ENCODE measurements at regions of chr2 and their contacts with region 1.

Region 1: GRCh38 chr2:3651691-3652648 is 6.0 kb upstream of the ALLC start:
- DNase-seq: no peak
- ATAC-seq: no peak
- H3K4me3 ChIP-seq: no peak overlapping the region
- H3K27ac ChIP-seq: no peak overlapping the region
- H3K4me1 ChIP-seq: peaks cover 4% of the 10 kb centered on the region; the same call in 1 of the 2 replicates
- H3K27me3 ChIP-seq: no peaks in the 10 kb centered on the region; the same call in 1 of the 2 replicates
- CTCF ChIP-seq: no peak
- POLR2A ChIP-seq: no peak
- RAD21 ChIP-seq: no peak

Region 2: DNA sequence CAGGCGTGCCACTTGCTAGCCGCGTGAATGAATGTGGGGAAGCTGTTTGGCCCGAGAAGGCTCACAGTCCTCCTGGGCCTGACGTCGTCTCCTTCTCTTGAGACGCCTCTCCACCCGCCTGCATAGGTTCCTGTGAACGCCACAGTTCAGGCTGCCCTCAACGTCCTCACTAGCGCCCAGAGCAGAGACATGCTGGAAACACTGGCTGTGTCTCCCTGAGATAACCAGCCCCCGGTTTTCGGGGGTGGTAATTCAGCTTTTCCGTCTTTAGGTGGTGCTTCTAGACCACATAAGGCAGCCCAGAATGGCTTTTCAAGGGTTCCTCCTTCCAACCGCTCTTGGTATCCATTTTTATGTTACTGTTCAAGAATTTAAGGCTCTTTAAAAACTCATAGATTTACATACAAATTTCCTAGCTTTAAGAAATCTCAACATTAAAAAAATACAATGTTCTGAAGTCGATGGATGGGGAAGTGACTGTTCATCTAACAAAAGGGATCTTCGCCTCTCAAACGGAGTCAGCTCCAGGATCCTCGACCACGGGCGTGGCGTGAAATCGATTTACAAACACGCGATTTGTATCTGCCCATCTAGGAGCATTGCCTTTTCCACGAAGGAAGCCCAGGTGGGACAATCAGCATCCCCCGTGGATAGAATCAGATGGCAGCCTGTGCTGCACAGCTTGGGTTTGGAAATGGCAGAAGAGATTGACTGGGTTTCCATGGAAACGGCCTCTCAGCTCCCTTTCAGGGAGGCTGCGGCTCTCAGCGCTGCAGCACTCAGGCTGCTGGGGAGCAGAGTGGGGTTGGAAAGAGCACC is 1797.0 kb before region 1 on chr2:
- CTCF ChIA-PET with region 1: no interaction called
- POLR2A ChIA-PET with region 1: no interaction called
- dilution Hi-C with region 1: no loop called
- in situ Hi-C with region 1: loop called (anchors 25 kb)
- intact Hi-C with region 1: no loop called
- DNase-seq: peak; percentile 11
- ATAC-seq: peak; percentile 77
- H3K4me3 ChIP-seq: no peak overlapping the region
- H3K27ac ChIP-seq: no peak overlapping the region
- H3K4me1 ChIP-seq: no peaks in the 10 kb centered on the region
- H3K27me3 ChIP-seq: peaks cover 37% of the 10 kb centered on the region
- CTCF ChIP-seq: peak; percentile 43
- POLR2A ChIP-seq: no peak
- RAD21 ChIP-seq: peak; percentile 49

Region 3: DNA sequence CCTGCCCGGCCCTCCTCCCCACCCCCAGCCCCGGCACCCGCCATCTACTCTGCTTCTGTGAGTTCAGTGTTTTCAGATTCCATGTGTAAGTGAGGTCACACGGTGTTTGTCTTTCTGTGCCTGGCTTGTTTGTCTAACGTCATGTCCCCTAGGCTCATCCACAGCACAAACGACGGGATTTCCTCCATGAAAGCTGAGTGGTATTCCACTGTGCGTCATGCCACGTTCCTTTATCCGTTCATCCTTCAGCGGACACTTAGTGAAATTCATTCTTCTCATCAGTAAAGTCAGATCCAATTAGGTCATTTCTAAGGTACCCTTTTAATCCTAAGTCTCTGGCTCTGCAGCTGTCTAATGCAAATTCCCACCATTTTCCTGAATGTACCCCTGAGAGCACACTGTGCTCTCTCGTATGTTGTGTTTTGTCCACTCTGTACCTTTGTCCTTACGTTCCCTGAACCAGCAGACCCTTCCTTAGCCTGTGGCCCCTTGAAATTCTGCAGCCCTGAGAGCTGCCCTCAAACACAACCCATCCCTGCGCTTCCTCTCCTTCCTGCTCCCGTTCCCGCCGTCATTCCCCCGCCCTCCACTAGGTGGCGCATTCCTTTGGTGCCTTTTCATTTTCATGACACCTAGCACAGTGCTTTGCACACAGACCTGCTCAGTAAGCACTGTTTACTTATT is 228.3 kb before region 1 on chr2:
- CTCF ChIA-PET with region 1: interaction called, 3 read pairs
- POLR2A ChIA-PET with region 1: no interaction called
- dilution Hi-C with region 1: no loop called
- in situ Hi-C with region 1: loop called (anchors 10 kb)
- intact Hi-C with region 1: loop called (anchors 1 kb)
- DNase-seq: peak; percentile 27
- ATAC-seq: peak; percentile 60; the same call in 1 of the 2 replicates
- H3K4me3 ChIP-seq: no peak overlapping the region
- H3K27ac ChIP-seq: no peak overlapping the region
- H3K4me1 ChIP-seq: peaks cover 2% of the 10 kb centered on the region; the same call in 1 of the 2 replicates
- H3K27me3 ChIP-seq: no peaks in the 10 kb centered on the region
- CTCF ChIP-seq: peak; percentile 73
- POLR2A ChIP-seq: no peak
- RAD21 ChIP-seq: peak; percentile 62

Region 4: GRCh38 chr2:3461801-3462492 is 190.0 kb before region 1 on chr2:
- CTCF ChIA-PET with region 1: no interaction called
- POLR2A ChIA-PET with region 1: no interaction called
- dilution Hi-C with region 1: no loop called
- in situ Hi-C with region 1: no loop called
- intact Hi-C with region 1: loop called (anchors 5 kb)
- DNase-seq: peak; percentile 65
- ATAC-seq: peak; percentile 65
- H3K4me3 ChIP-seq: no peak overlapping the region
- H3K27ac ChIP-seq: no peak overlapping the region
- H3K4me1 ChIP-seq: peaks cover 12% of the 10 kb centered on the region
- H3K27me3 ChIP-seq: no peaks in the 10 kb centered on the region
- CTCF ChIP-seq: peak; percentile 88
- POLR2A ChIP-seq: no peak
- RAD21 ChIP-seq: peak; percentile 72

Region 5: GRCh38 chr2:3523551-3524041 is 128.4 kb before region 1 on chr2:
- CTCF ChIA-PET with region 1: no interaction called
- POLR2A ChIA-PET with region 1: no interaction called
- dilution Hi-C with region 1: no loop called
- in situ Hi-C with region 1: no loop called
- intact Hi-C with region 1: loop called (anchors 2 kb)
- DNase-seq: peak; percentile 49
- ATAC-seq: 0 out of 2 replicates have a peak, but pooled peaks have one; percentile 3
- H3K4me3 ChIP-seq: no peak overlapping the region
- H3K27ac ChIP-seq: peak overlapping the region; percentile 88; the same call in 1 of the 2 replicates
- H3K4me1 ChIP-seq: peaks cover 15% of the 10 kb centered on the region
- H3K27me3 ChIP-seq: no peaks in the 10 kb centered on the region
- CTCF ChIP-seq: no peak
- POLR2A ChIP-seq: no peak
- RAD21 ChIP-seq: no peak

Region 6: GRCh38 chr2:3558205-3559014 is 93.6 kb before region 1 on chr2 and contains the start of gene RNASEH1:
- CTCF ChIA-PET with region 1: no interaction called
- POLR2A ChIA-PET with region 1: no interaction called
- dilution Hi-C with region 1: no loop called
- in situ Hi-C with region 1: no loop called
- intact Hi-C with region 1: loop called (anchors 1 kb)
- DNase-seq: peak; percentile 99
- ATAC-seq: peak; percentile 99
- H3K4me3 ChIP-seq: peak within 1 kb of the TSS; percentile 68
- H3K27ac ChIP-seq: peak within 1 kb of the TSS; percentile 79
- H3K4me1 ChIP-seq: peaks cover 3% of the 10 kb centered on the region; the same call in 1 of the 2 replicates
- H3K27me3 ChIP-seq: no peaks in the 10 kb centered on the region
- CTCF ChIP-seq: no peak
- POLR2A ChIP-seq: peak; percentile 96
- RAD21 ChIP-seq: no peak
- total RNA-seq, gene RNASEH1: 23.7 and 38.3 TPM in 2 replicates

Region 7: GRCh38 chr2:3585261-3586109 is 66.5 kb before region 1 on chr2:
- CTCF ChIA-PET with region 1: no interaction called
- POLR2A ChIA-PET with region 1: no interaction called
- dilution Hi-C with region 1: no loop called
- in situ Hi-C with region 1: no loop called
- intact Hi-C with region 1: loop called (anchors 2 kb)
- DNase-seq: peak; percentile 95
- ATAC-seq: peak; percentile 69
- H3K4me3 ChIP-seq: peak overlapping the region; percentile 20
- H3K27ac ChIP-seq: peak overlapping the region; percentile 82
- H3K4me1 ChIP-seq: peaks cover 21% of the 10 kb centered on the region
- H3K27me3 ChIP-seq: no peaks in the 10 kb centered on the region
- CTCF ChIP-seq: no peak
- POLR2A ChIP-seq: no peak
- RAD21 ChIP-seq: no peak

Measured in IMR-90 (cell line).